SK-N-SH (cell line): ENCODE measurements at regions of chr6 and their contacts with region 1.

Region 1: GRCh38 chr6:112253841-112254816 is at the start of gene LAMA4:
- DNase-seq: peak; percentile 64
- H3K4me3 ChIP-seq: peak within 1 kb of the TSS; percentile 63
- H3K27ac ChIP-seq: peak within 1 kb of the TSS in 1 of 2 experiments; percentile 80; a peak in 3 of 4 replicates
- H3K4me1 ChIP-seq: peaks cover 3 to 18% of the 10 kb centered on the region in 2 experiments; a peak in 2 of 4 replicates
- H3K27me3 ChIP-seq: no peaks in the 10 kb centered on the region
- CTCF ChIP-seq: no peak
- EP300 ChIP-seq: no peak
- RAD21 ChIP-seq: no peak
- polyA plus RNA-seq, gene LAMA4: 9.4 and 10.5 TPM in 2 replicates

Region 2: GRCh38 chr6:112269114-112269513 is 15.0 kb after region 1 on chr6:
- CTCF ChIA-PET with region 1: interaction called, 38 read pairs
- POLR2A ChIA-PET with region 1: interaction called, 3 read pairs
- DNase-seq: no peak
- H3K4me3 ChIP-seq: no peak overlapping the region
- H3K27ac ChIP-seq: peak overlapping the region in 1 of 2 experiments; percentile 74; a peak in 2 of 4 replicates
- H3K4me1 ChIP-seq: peaks cover 0 to 19% of the 10 kb centered on the region in 2 experiments; a peak in 2 of 4 replicates
- H3K27me3 ChIP-seq: no peaks in the 10 kb centered on the region
- CTCF ChIP-seq: peak; percentile 41
- EP300 ChIP-seq: no peak
- RAD21 ChIP-seq: peak; percentile 53